GM12878 (cell line): ENCODE measurements at regions of chr2 and their contacts with region 1.

Region 1: DNA sequence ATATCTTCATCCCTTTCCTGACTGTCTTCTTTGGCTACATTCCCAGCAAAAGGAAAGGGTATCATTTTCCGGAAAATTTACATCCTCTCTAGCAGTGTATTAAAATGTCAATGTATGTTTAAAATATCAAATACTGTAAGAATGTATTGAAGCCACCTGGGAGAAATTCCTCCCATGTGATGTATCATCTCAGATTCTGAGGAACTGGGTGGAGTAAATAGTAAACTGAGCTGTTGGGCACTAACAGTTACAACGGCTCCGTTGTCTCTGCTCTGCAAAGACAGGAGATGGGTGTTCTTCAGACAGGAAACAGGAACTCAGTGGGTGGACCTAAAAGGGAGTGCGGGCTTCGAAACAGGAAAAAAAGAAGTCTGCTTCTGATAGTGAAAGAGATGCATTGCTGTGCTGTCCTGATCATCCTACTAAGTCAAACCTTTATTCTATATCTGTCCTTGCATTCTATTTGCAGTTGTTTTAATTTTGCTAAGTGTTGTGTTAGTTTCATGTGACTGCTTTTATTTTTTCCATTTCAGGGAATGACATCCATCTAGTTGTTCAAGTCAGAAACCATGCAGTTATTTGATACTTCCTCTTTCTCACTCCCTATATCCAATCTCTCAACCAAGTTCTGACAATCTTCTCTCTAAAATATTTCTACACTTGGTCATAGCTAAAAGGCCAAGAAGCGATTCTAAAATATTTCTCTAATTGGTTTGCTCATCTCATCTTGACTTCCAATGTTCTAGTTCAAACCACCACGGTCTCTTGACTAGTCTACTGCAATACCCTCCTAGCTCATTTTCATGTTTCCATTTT is 19.4 kb downstream of the DOK1 start:
- DNase-seq: peak; percentile 59
- ATAC-seq: peak; percentile 54
- H3K4me3 ChIP-seq: peak overlapping the region; percentile 13; the same call in 1 of the 2 replicates
- H3K27ac ChIP-seq: peak overlapping the region; percentile 43
- H3K4me1 ChIP-seq: peaks cover 77% of the 10 kb centered on the region
- H3K27me3 ChIP-seq: no peaks in the 10 kb centered on the region
- CTCF ChIP-seq: no peak
- EP300 ChIP-seq: no peak; a peak in 1 of 4 replicates
- POLR2A ChIP-seq: no peak
- RAD21 ChIP-seq: no peak

Region 2: DNA sequence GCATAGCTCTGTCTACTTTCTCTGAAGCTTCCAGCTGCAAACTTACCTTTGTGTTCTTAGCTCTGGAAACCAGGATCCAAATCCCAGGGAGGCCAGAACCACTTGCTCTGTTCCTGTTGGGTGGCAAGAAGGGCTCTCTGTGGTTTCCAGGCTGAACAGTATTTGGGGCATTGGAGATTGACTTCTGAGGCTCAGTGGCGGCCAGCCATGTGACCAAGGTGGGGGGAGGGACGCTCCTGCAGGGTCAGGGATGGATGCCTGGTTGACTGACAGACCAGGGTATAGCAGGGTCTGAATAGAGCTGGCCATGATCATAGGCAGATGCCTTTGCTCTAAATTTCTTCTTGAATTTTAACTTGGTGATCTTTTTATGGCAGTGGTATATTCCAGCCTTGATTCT is 245.9 kb before region 1 on chr2:
- CTCF ChIA-PET with region 1: no interaction called
- POLR2A ChIA-PET with region 1: no interaction called
- RAD21 ChIA-PET with region 1: no interaction called
- SMC1A ChIA-PET with region 1: no interaction called
- in situ Hi-C with region 1: no loop called
- intact Hi-C with region 1: no loop called
- DNase-seq: no peak
- ATAC-seq: no peak
- H3K4me3 ChIP-seq: no peak overlapping the region
- H3K27ac ChIP-seq: no peak overlapping the region
- H3K4me1 ChIP-seq: no peaks in the 10 kb centered on the region
- H3K27me3 ChIP-seq: no peaks in the 10 kb centered on the region
- CTCF ChIP-seq: no peak
- EP300 ChIP-seq: no peak
- POLR2A ChIP-seq: no peak
- RAD21 ChIP-seq: no peak

Region 3: DNA sequence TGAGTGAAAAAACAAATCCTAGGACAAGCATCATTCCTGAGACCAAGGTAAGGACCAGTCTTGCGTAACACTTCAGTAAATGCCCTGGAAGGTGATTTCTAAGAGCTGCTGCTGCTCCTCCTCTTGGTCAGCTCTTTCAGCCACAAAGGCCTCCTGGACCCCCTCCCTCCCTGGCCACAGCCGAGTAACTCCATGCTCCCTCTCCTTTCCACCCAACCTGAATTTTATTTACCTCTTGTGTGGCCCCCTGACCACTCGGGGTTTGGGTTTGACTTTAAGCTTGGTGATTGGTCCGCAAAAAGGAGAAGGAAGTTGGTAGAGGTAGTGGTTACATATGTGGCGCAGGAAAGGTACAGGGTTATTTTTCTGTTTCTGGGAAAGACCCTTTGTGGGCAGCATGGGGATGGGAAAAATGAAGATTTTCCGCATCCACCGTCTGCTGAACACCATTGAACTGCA is 35.0 kb before region 1 on chr2:
- CTCF ChIA-PET with region 1: interaction called, 6 read pairs
- POLR2A ChIA-PET with region 1: interaction called, 441 read pairs
- RAD21 ChIA-PET with region 1: interaction called, 6 read pairs
- SMC1A ChIA-PET with region 1: interaction called, 27 read pairs
- in situ Hi-C with region 1: no loop called
- intact Hi-C with region 1: no loop called
- DNase-seq: peak; percentile 40
- ATAC-seq: peak; percentile 85
- H3K4me3 ChIP-seq: peak overlapping the region; percentile 12; the same call in 1 of the 2 replicates
- H3K27ac ChIP-seq: peak overlapping the region; percentile 65
- H3K4me1 ChIP-seq: peaks cover 15% of the 10 kb centered on the region
- H3K27me3 ChIP-seq: no peaks in the 10 kb centered on the region
- CTCF ChIP-seq: no peak
- EP300 ChIP-seq: peak in 1 of 2 experiments; percentile 35; a peak in 1 of 4 replicates
- POLR2A ChIP-seq: 0 out of 2 replicates have a peak, but pooled peaks have one; percentile 23
- RAD21 ChIP-seq: no peak

Region 4: GRCh38 chr2:74553892-74554645 is 19.9 kb before region 1 on chr2 and contains the start of gene LOXL3:
- CTCF ChIA-PET with region 1: interaction called, 29 read pairs
- POLR2A ChIA-PET with region 1: interaction called, 441 read pairs
- RAD21 ChIA-PET with region 1: interaction called, 94 read pairs
- SMC1A ChIA-PET with region 1: interaction called, 61 read pairs
- in situ Hi-C with region 1: no loop called
- intact Hi-C with region 1: loop called (anchors 2 kb)
- DNase-seq: no peak
- ATAC-seq: peak; percentile 20
- H3K4me3 ChIP-seq: peak within 1 kb of the TSS; percentile 95
- H3K27ac ChIP-seq: peak within 1 kb of the TSS; percentile 93
- H3K4me1 ChIP-seq: peaks cover 29% of the 10 kb centered on the region
- H3K27me3 ChIP-seq: no peaks in the 10 kb centered on the region
- CTCF ChIP-seq: no peak; a peak in 1 of 6 replicates
- EP300 ChIP-seq: peak in 1 of 2 experiments; percentile 28; a peak in 1 of 4 replicates
- POLR2A ChIP-seq: peak; percentile 62; the same call in 1 of the 2 replicates
- RAD21 ChIP-seq: 0 out of 2 replicates have a peak, but pooled peaks have one; percentile 4
- polyA plus RNA-seq, gene LOXL3: 6.2 to 6.7 TPM

Region 5: GRCh38 chr2:74690571-74690970 is 116.6 kb after region 1 on chr2:
- CTCF ChIA-PET with region 1: no interaction called
- POLR2A ChIA-PET with region 1: no interaction called
- RAD21 ChIA-PET with region 1: no interaction called
- SMC1A ChIA-PET with region 1: no interaction called
- in situ Hi-C with region 1: no loop called
- intact Hi-C with region 1: no loop called
- DNase-seq: peak; percentile 28
- ATAC-seq: peak; percentile 95
- H3K4me3 ChIP-seq: no peak overlapping the region
- H3K27ac ChIP-seq: no peak overlapping the region
- H3K4me1 ChIP-seq: no peaks in the 10 kb centered on the region
- H3K27me3 ChIP-seq: peaks cover 0 to 2% of the 10 kb centered on the region in 2 experiments; a peak in 1 of 4 replicates
- CTCF ChIP-seq: peak; percentile 71 to 92 (median 72)
- EP300 ChIP-seq: no peak
- POLR2A ChIP-seq: no peak
- RAD21 ChIP-seq: peak; percentile 94